ENCODE measurements at regions of chr7 and their contacts with region 1.

Region 1: DNA sequence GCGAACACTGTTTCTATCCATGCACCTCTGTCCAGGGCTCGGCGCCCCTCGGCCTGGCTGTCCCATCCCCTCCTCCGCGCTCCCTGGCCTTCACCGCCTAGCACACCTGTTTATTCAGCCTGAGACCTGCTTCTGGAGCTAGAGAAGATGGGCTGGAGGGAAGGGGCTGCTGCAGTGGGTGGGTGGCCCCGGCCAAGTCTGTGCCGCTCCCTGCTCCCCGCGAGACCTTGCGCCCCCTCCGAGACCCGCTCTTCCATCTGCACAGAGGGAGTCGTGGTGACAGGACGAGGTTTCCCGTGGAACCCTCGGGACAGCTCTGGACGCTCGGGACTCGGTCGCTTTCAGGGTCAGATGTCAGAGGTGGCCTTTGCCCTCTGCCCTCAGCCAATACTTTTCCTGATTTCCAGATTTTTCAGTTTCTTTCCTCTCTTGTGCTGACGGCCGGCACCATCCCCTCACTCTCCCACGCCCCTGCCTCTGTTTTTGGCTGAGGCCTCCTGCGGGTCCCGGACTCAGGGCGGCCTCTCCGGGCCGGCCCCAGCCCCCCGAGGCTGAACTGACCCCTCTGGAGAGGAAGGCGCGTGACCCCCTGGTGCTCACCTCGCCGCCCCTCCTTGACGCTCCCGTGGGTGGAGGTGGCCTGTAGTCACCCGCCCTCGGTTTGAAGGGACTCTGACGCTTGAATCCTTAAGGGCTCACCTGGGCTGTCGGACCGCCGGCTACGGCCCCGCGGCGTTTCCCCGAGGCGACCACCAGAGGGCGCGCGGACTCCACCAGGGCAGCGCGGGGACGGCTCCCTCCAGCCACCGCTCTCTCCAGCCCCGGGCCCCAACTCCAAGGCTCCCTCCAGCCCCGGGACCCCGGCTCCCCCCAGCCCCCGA is 15.6 kb downstream of the SHH start:
- DNase-seq: peak; percentile 85

Region 2: GRCh38 chr7:155032978-155033377 is 763.6 kb before region 1 on chr7:
- intact Hi-C with region 1: no loop called
- DNase-seq: no peak

Region 3: GRCh38 chr7:156473476-156474240 is 677.0 kb after region 1 on chr7:
- intact Hi-C with region 1: loop called (anchors 5 kb)
- DNase-seq: no peak

Region 4: DNA sequence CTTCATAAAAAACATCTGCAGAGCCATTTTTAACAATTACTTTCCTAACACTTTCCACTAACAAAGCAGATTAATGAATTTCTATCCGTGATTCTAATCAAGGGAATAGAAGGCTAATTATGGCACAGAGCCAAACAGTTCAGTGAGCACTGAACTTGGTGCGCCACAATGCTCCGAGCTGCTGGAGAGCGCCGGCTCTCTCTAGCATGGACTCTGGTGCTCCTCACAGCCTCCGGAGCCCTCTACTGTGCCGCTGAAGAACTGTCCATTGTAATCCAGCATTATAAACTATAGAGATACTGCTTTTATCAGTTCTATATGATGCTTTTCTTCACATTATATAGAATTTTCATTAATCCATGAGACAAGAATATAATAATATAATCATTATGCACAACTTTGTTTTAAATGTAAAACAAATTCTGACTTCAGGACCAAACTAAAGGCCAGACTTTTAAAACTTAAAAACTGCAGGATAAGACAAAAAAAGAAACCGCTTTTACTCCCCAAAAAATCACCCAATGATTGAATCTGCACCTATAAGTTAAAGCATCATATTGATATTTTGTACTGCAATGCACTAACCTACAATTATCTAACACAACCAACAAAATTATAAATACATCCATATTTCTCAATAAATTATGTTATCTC is 967.5 kb after region 1 on chr7:
- intact Hi-C with region 1: loop called (anchors 10 kb)
- DNase-seq: no peak